Activated CD8-positive, alpha-beta memory T cell treated with anti-CD3 and anti-CD28 coated beads, Interleukin-2, amount 10 ng/mL, durations not matched to agents 7 days and 5 days (primary cell): ENCODE measurements at regions of chr4 and their contacts with region 1.

Region 1: DNA sequence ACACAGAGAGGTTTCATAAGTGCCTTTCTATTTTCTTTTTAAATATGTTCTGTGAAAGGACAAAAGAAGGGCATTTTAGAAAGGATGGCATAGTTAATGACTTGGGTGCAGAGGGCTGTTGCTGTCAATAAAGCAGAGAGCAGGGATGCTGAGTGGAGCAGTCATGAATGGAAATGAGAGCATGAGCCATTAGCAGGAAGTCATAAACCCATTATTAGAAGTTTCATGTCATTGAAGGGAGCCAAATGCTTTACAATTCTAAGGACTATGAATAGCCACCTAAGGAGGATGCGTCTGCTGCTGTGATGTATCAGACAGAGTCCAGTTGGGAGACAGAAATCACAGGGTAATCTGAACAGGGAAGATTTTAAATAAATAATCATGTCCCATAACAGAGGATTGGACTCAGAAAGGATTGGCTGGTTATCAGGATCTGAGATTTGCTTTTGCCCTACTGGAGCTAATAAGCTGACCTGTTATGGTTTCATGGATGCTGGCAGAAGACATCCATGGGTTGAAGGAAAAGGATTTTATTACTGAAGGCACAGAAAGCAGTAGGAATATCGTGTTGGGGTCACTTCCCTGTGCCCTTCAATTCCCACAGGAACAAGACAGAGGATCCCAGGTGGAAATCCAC is 47.5 kb upstream of the WDR19 start:
- DNase-seq: no peak
- ATAC-seq: no peak
- H3K4me3 Mint-ChIP-seq: no peak overlapping the region
- H3K27ac Mint-ChIP-seq: no peak overlapping the region
- H3K4me1 Mint-ChIP-seq: peaks cover 10% of the 10 kb centered on the region
- H3K27me3 Mint-ChIP-seq: no peaks in the 10 kb centered on the region

Region 2: DNA sequence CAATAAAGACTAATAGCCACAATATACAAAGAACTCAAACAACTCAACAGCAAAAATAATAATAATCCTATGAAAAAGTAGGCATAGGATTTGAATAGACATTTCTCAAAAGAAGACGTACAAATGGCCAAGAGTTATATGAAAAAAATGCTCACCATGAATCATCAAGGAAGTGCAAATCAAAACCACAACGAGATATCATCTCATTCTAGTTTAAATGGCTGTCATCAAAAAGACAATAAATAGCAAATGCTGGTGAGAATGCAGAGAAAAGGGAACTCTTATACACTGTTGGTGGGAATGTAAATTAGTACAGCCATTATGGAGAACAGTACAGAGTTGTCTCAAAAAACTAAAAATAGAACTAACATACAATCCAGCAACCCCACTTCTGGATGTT is 297.0 kb before region 1 on chr4:
- CTCF ChIA-PET with region 1: no interaction called
- DNase-seq: no peak
- ATAC-seq: no peak
- H3K4me3 Mint-ChIP-seq: no peak overlapping the region
- H3K27ac Mint-ChIP-seq: no peak overlapping the region
- H3K4me1 Mint-ChIP-seq: peaks cover 11% of the 10 kb centered on the region
- H3K27me3 Mint-ChIP-seq: no peaks in the 10 kb centered on the region

Region 3: GRCh38 chr4:38889143-38889542 is 245.7 kb before region 1 on chr4:
- CTCF ChIA-PET with region 1: interaction called, 18 read pairs
- DNase-seq: no peak
- ATAC-seq: peak; percentile 77
- H3K4me3 Mint-ChIP-seq: no peak overlapping the region
- H3K27ac Mint-ChIP-seq: peak overlapping the region; percentile 54
- H3K4me1 Mint-ChIP-seq: peaks cover 14% of the 10 kb centered on the region
- H3K27me3 Mint-ChIP-seq: no peaks in the 10 kb centered on the region

Region 4: DNA sequence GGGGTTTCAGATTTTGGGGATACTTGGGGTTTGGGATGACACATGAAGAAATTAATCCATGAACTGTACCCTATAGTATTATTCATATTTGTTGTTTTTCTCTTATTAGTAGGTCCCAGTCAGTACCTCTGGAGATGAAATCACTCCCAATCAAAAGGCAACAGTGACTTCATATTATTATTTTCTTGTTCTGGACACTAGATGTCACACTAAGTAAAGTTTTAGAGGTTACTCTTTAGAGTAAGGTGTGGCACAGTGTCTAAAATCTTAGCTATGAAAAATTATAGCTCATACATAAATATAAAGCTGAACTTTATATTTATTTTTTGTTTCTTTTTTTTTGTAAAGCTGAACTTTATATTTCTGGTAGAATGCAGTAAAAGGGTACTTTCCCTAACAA is 232.1 kb before region 1 on chr4:
- CTCF ChIA-PET with region 1: interaction called, 80 read pairs
- DNase-seq: no peak
- ATAC-seq: peak; percentile 78
- H3K4me3 Mint-ChIP-seq: no peak overlapping the region
- H3K27ac Mint-ChIP-seq: no peak overlapping the region
- H3K4me1 Mint-ChIP-seq: peaks cover 7% of the 10 kb centered on the region
- H3K27me3 Mint-ChIP-seq: peaks cover 11% of the 10 kb centered on the region

Region 5: DNA sequence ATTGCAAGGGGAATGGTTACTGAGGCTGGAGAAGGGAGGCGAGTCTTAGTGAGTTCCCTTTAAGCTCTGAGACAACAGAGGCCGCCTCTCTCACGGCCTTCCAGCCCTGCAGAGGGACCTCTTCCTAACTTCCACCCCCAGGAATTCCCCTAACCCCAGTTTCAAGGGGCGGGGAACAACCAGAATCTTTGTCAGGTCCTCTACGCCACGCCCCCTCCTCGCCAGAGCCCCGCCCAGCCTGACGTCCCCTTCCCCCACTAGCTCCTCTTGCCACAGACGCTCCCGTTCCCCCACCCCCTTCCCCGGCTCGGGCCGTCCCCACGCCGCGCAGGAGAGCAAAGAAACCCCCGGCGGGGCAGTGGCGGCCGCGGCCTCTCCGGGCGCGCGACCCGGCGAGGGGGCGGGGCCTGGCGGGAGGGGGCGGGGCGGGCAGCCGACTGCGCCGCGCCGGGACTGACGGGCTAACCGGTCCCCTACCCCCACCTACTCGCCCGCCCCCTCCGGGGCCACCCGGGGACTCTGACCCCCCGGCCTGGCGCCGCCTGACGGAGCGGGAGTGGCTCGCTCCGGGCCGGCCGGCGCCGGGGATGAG is 90.3 kb before region 1 on chr4:
- CTCF ChIA-PET with region 1: interaction called, 10 read pairs
- DNase-seq: peak; percentile 95
- ATAC-seq: peak; percentile 83
- H3K4me3 Mint-ChIP-seq: peak overlapping the region; percentile 78
- H3K27ac Mint-ChIP-seq: peak overlapping the region; percentile 85
- H3K4me1 Mint-ChIP-seq: peaks cover 53% of the 10 kb centered on the region
- H3K27me3 Mint-ChIP-seq: no peaks in the 10 kb centered on the region

Region 6: DNA sequence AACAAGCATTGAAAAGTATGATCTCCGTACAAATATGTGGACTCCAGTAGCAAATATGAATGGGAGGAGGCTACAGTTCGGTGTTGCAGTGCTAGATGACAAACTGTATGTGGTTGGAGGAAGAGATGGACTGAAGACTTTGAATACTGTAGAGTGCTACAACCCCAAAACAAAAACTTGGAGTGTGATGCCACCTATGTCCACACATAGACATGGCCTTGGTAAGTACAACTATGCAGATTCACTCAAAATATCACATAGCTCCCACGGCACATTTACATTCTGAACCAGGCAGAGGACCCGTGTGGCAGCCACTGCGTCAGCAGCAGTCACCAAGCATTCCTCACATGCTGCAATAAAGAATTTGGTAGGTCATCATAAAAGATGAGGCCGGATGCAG is 31.5 kb before region 1 on chr4:
- CTCF ChIA-PET with region 1: interaction called, 12 read pairs
- DNase-seq: no peak
- ATAC-seq: no peak
- H3K4me3 Mint-ChIP-seq: no peak overlapping the region
- H3K27ac Mint-ChIP-seq: no peak overlapping the region
- H3K4me1 Mint-ChIP-seq: no peaks in the 10 kb centered on the region
- H3K27me3 Mint-ChIP-seq: no peaks in the 10 kb centered on the region